ENCODE measurements at regions of chrX and their contacts with region 1.

Region 1: GRCh38 chrX:73850124-73851013 is 287.4 kb downstream of the CHIC1 start:
- H3K4me3 ChIP-seq: peak overlapping the region; percentile 79
- H3K27ac ChIP-seq: peak overlapping the region; percentile 99
- H3K4me1 ChIP-seq: no peaks in the 10 kb centered on the region
- CTCF ChIP-seq: peak; percentile 88

Region 2: DNA sequence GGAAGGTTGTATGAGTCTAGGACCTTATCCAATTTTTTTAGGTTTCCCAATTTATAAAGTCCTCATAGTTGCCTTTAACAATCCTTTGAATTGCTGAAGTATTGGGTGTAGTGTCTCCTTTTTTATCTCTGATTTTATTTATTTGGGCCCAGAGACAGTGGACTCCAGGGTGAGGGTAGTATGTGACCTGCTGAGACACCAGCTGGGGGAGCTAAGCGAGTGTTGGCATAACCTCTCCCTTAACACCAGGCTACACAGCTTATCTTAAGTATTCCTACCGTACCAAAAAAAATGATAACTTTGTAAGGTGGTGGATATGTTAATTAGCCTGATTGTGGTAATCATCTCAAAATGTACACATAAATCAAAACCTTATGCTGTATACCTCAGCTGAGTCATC is 440.3 kb before region 1 on chrX:
- CTCF ChIA-PET with region 1: no interaction called
- POLR2A ChIA-PET with region 1: no interaction called
- H3K4me3 ChIP-seq: no peak overlapping the region
- H3K27ac ChIP-seq: no peak overlapping the region
- H3K4me1 ChIP-seq: no peaks in the 10 kb centered on the region
- CTCF ChIP-seq: no peak

Region 3: GRCh38 chrX:73831500-73831899 is 18.9 kb before region 1 on chrX:
- CTCF ChIA-PET with region 1: no interaction called
- POLR2A ChIA-PET with region 1: interaction called, 66 read pairs
- H3K4me3 ChIP-seq: no peak overlapping the region
- H3K27ac ChIP-seq: peak overlapping the region; percentile 79
- H3K4me1 ChIP-seq: peaks cover 87% of the 10 kb centered on the region
- CTCF ChIP-seq: no peak

Region 4: GRCh38 chrX:73916931-73917667 is 66.7 kb after region 1 on chrX:
- CTCF ChIA-PET with region 1: interaction called, 20 read pairs
- POLR2A ChIA-PET with region 1: interaction called, 56 read pairs
- H3K4me3 ChIP-seq: no peak overlapping the region
- H3K27ac ChIP-seq: peak overlapping the region; percentile 69
- H3K4me1 ChIP-seq: peaks cover 40% of the 10 kb centered on the region
- CTCF ChIP-seq: no peak

Region 5: GRCh38 chrX:73943693-73944562 is 93.6 kb after region 1 on chrX:
- CTCF ChIA-PET with region 1: interaction called, 25 read pairs
- POLR2A ChIA-PET with region 1: interaction called, 17 read pairs
- H3K4me3 ChIP-seq: peak overlapping the region; percentile 80
- H3K27ac ChIP-seq: peak overlapping the region; percentile 98
- H3K4me1 ChIP-seq: peaks cover 12% of the 10 kb centered on the region
- CTCF ChIP-seq: peak; percentile 87

Region 6: GRCh38 chrX:74009041-74009440 is 158.7 kb after region 1 on chrX:
- CTCF ChIA-PET with region 1: interaction called, 82 read pairs
- POLR2A ChIA-PET with region 1: interaction called, 11 read pairs
- H3K4me3 ChIP-seq: no peak overlapping the region
- H3K27ac ChIP-seq: no peak overlapping the region
- H3K4me1 ChIP-seq: no peaks in the 10 kb centered on the region
- CTCF ChIP-seq: no peak

Region 7: DNA sequence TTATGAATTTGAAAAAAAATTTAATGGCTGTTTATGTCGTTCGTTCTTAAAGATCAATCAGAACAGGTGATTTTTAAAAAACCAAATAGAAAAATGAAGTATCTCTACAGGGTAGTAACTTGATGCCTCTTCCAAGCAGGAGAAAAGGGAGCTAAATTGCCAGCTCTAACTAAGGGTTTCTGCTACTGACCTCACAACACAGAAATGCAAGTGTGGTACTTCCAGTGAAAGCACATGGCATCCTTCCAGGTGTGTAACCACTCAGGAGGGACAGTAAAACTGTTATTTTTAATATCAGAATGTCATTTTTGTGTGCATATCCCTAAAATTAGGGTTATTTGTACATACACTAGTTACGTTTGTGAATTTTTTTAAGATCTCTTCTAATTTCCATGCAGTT is 336.8 kb after region 1 on chrX:
- CTCF ChIA-PET with region 1: no interaction called
- POLR2A ChIA-PET with region 1: no interaction called
- H3K4me3 ChIP-seq: no peak overlapping the region
- H3K27ac ChIP-seq: no peak overlapping the region
- H3K4me1 ChIP-seq: no peaks in the 10 kb centered on the region
- CTCF ChIP-seq: no peak

Region 8: GRCh38 chrX:74922922-74923543 is 1072.7 kb after region 1 on chrX:
- CTCF ChIA-PET with region 1: no interaction called
- POLR2A ChIA-PET with region 1: no interaction called
- H3K4me3 ChIP-seq: no peak overlapping the region
- H3K27ac ChIP-seq: no peak overlapping the region
- H3K4me1 ChIP-seq: no peaks in the 10 kb centered on the region
- CTCF ChIP-seq: no peak